ENCODE measurements at regions of chr12 and their contacts with region 1.

Region 1: DNA sequence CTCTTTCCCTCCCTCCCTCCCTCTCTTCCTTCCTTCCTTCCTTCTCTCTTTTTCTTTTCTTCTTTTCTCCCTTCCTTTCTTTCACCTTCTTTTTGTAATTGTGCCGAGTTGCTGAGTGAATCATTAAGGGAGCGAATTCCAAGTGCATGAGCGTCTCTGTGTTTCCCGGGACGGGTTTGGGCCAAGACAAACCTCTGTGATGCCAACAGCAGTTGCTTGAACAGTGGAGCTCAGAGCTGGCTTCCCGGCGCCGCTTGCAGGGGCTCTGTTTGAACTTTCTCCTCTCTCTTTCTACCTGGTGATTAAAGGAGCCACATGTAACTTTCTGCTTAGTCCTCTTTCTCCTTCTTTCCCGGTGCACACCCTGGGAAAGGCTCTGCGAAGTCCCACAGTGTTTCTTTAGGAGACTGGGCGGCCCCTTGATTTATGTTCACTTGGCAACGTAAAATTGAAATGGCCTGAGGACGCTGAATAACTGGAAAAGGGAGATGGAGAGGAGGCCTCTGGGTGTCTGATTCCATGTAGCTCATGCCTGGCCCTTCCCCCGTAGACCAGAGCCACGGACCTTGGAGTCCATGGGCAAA is 33.7 kb upstream of the MAP1LC3B2 start:
- DNase-seq: no peak
- ATAC-seq: no peak
- H3K4me3 ChIP-seq: no peak overlapping the region
- H3K4me3 Mint-ChIP-seq: no peak overlapping the region
- H3K27ac ChIP-seq: no peak overlapping the region
- H3K27ac Mint-ChIP-seq: no peak overlapping the region
- H3K4me1 ChIP-seq: peaks cover 6% of the 10 kb centered on the region
- H3K4me1 Mint-ChIP-seq: peaks cover 9% of the 10 kb centered on the region
- H3K27me3 ChIP-seq: no peaks in the 10 kb centered on the region
- H3K27me3 Mint-ChIP-seq: no peaks in the 10 kb centered on the region
- CTCF ChIP-seq: no peak

Region 2: GRCh38 chr12:116513944-116514343 is 11.6 kb before region 1 on chr12:
- CTCF ChIA-PET with region 1: no interaction called
- POLR2A ChIA-PET with region 1: no interaction called
- intact Hi-C with region 1: no loop called
- DNase-seq: no peak
- ATAC-seq: no peak
- H3K4me3 ChIP-seq: no peak overlapping the region
- H3K4me3 Mint-ChIP-seq: no peak overlapping the region
- H3K27ac ChIP-seq: no peak overlapping the region
- H3K27ac Mint-ChIP-seq: no peak overlapping the region
- H3K4me1 ChIP-seq: no peaks in the 10 kb centered on the region
- H3K4me1 Mint-ChIP-seq: no peaks in the 10 kb centered on the region
- H3K27me3 ChIP-seq: no peaks in the 10 kb centered on the region
- H3K27me3 Mint-ChIP-seq: peaks cover 15% of the 10 kb centered on the region
- CTCF ChIP-seq: no peak

Region 3: GRCh38 chr12:116542004-116542956 is 16.8 kb after region 1 on chr12:
- CTCF ChIA-PET with region 1: no interaction called
- POLR2A ChIA-PET with region 1: no interaction called
- intact Hi-C with region 1: loop called in 1 of 2 experiments (anchors 2 kb)
- DNase-seq: no peak
- ATAC-seq: no peak
- H3K4me3 ChIP-seq: no peak overlapping the region
- H3K4me3 Mint-ChIP-seq: no peak overlapping the region
- H3K27ac ChIP-seq: no peak overlapping the region
- H3K27ac Mint-ChIP-seq: no peak overlapping the region
- H3K4me1 ChIP-seq: peaks cover 10% of the 10 kb centered on the region
- H3K4me1 Mint-ChIP-seq: no peaks in the 10 kb centered on the region
- H3K27me3 ChIP-seq: no peaks in the 10 kb centered on the region
- H3K27me3 Mint-ChIP-seq: no peaks in the 10 kb centered on the region
- CTCF ChIP-seq: no peak